Activated CD4-positive, alpha-beta T cell treated with anti-CD3 and anti-CD28 coated beads, Interleukin-2, amount 10 ng/mL, durations not matched to agents 7 days and 5 days (primary cell): ENCODE measurements at regions of chr10 and their contacts with region 1.

Region 1: DNA sequence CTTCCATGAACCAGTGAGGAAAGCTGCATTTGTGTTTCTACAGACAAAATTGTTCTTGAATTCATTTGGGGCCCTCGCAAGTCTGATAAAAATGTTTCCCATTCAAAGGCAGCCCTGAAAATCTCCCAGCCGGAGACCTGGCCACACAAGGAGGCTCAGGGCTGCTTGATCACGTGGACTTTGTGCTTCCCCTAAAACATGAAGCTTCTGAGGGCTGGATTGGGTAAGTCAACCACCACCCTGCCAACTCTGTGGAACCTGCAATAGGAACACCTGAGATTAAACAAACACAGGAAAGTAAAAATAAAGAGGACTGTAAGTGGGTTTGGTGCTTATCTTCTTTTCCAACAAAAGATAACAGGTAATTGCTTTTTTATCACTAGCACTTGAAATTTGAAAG is 133.8 kb downstream of the C10orf90 start:
- DNase-seq: no peak
- H3K4me3 Mint-ChIP-seq: no peak overlapping the region
- H3K27ac Mint-ChIP-seq: no peak overlapping the region
- H3K4me1 Mint-ChIP-seq: no peaks in the 10 kb centered on the region
- H3K27me3 Mint-ChIP-seq: no peaks in the 10 kb centered on the region

Region 2: GRCh38 chr10:125828311-125828710 is 708.3 kb before region 1 on chr10:
- CTCF ChIA-PET with region 1: no interaction called
- POLR2A ChIA-PET with region 1: interaction called, 11 read pairs
- DNase-seq: no peak
- H3K4me3 Mint-ChIP-seq: no peak overlapping the region
- H3K27ac Mint-ChIP-seq: no peak overlapping the region
- H3K4me1 Mint-ChIP-seq: peaks cover 23% of the 10 kb centered on the region
- H3K27me3 Mint-ChIP-seq: no peaks in the 10 kb centered on the region

Region 3: GRCh38 chr10:126663328-126663727 is 126.7 kb after region 1 on chr10:
- CTCF ChIA-PET with region 1: no interaction called
- POLR2A ChIA-PET with region 1: no interaction called
- DNase-seq: no peak
- H3K4me3 Mint-ChIP-seq: no peak overlapping the region
- H3K27ac Mint-ChIP-seq: no peak overlapping the region
- H3K4me1 Mint-ChIP-seq: no peaks in the 10 kb centered on the region
- H3K27me3 Mint-ChIP-seq: no peaks in the 10 kb centered on the region